ENCODE measurements at regions of chr1 and their contacts with region 1.

Region 1: DNA sequence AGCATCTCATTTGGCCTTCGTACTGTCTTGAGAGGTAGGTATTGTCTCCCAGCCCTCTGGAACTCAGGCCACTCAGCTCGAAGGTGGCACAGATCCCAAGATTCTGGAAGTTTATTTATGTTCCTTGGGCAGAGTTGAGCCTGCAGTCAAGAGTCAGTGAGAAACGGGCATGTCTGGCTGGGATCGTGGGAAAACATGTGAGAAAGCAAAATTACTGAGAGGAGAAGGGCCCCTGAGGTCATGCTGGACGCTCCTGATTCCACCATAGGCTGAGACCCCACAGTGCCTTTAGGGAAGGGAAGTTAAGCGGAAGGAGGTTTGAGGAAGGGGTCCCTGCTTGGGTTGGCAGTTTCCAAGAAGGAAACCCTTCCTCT is 12.5 kb upstream of the SEMA4A start:
- DNase-seq: no peak

Region 2: DNA sequence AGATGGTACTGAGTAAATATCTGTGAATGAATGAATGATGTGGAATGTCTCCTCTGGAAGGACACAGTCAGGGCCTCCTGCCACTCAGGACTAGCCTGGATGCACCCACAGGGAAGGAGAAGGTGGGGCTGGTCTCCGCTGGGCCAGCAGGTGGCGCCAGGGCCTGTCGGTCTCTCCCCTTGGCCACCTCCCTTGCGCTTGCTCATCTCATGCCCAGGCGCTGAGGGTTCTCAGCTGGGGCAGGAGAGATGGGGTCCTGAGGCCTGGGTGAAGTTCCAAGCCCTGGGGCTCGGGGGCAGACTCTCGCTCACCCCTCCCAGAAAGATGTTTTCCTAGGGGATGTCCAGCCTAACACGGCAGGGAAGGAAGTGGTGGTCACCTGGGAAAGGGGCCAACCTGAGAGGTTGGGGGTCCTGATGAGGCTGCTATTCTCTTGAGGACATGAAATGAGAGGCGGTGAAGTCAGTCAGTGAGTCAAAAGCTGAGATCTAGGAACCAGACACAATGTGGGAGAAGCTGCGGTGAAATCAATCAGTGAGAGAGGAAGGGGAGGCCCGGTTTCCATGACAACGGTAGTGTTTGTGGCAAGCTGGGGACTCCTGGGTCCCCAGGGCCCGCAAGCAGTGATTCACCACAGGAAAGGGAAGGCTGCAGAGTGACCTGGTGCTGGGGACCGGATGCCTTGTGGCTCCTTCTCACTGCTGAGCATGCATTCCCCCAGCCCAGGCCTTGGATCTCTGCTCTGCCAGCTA is 44.0 kb before region 1 on chr1:
- intact Hi-C with region 1: loop called (anchors 5 kb)
- DNase-seq: peak; percentile 93